Sigmoid colon (tissue), 7 donors: ENCODE measurements at regions of chr10 and their contacts with region 1.

Region 1: DNA sequence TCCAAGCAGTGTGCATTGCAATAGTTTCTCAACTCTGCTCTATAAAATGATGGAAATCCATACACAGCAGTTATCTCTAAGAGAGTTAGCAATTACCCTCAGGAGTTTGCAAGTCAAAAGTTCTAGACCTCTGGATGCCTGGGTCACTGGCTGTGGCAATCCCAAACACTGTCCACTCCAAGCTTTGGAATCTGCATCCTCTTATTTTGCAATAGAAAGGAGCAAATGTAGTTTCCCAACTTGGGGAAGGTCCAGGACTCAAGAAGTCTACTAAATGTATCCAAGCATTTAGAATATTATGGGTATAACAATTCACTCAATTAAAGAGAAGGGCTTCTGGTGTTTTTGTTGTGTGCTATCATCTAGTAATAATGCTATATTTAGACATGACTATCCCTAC is 131.3 kb upstream of the NRP1 start:
- DNase-seq: no peak
- H3K4me3 ChIP-seq: no peak overlapping the region
- H3K27ac ChIP-seq: no peak overlapping the region
- H3K4me1 ChIP-seq: peaks cover 0 to 11% (median 6%) of the 10 kb centered on the region in 4 donors
- H3K27me3 ChIP-seq: no peaks in the 10 kb centered on the region
- CTCF ChIP-seq: no peak
- EP300 ChIP-seq: no peak
- POLR2A ChIP-seq: no peak

Region 2: DNA sequence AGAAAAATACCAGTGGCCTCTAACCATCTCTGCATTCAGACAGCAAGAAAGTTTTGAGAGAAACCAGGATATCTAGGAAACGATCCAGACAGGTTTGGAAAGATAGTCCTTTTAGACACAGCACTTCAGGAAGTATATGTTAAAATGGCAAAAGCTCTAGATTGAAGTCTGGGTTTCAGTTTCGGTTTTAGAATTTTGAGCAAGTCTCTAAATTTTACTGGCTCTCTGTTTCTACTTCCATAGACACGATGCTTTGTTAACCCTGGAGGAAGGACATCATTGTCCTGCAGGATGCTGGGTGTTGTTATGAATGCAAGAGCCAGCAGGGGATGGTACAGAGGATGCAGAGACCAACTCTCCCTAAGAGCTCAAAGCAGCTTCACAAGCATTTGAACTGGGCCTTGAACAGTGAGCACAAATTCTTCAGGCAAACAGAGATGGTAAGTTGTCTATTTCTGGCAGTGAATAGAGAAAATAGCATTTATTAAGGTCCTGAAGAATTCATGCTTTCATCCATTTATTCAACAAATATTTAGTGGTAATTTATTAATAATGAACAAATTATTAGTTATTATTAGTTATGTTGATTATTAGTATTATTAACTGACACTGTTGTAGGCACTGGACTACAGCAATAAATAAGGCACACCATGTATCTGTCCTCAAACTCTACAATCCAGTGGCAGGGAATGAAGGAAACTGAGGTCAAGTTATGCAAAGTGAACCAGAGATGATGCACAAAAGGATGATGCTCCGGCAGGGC is 21.4 kb after region 1 on chr10:
- intact Hi-C with region 1: loop called (anchors 1 kb)
- DNase-seq: no peak
- H3K4me3 ChIP-seq: peak overlapping the region in 2 of 4 donors; percentile 2 to 15
- H3K27ac ChIP-seq: peak overlapping the region; percentile 8 to 64 (median 46)
- H3K4me1 ChIP-seq: peaks cover 0 to 57% (median 31%) of the 10 kb centered on the region in 4 donors
- H3K27me3 ChIP-seq: no peaks in the 10 kb centered on the region
- CTCF ChIP-seq: no peak
- EP300 ChIP-seq: no peak
- POLR2A ChIP-seq: no peak